Common myeloid progenitor, CD34-positive (primary cell): ENCODE measurements at regions of chr6 and their contacts with region 1.

Region 1: DNA sequence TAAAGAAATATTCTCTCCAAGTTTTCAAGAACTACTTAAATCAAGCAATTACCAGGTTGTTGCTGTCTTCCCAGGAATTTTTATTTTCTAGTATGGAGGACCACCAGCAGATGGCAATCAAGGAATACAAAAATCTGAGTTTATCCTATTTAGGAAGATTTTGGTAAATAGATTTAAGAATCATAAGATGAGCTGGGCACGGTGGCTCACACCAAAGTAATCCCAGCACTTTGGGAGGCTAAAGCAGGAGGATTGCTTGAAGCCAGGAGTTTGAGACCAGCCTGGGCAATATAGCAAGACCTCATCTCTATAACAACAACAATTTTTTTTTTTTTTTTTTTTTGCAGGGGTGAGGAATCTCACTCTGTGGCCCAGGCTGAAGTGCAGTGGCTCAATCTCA is 19.3 kb upstream of the SEC63 start:
- DNase-seq: peak; percentile 43 to 53 (median 48)
- H3K4me3 ChIP-seq: no peak overlapping the region
- H3K27ac ChIP-seq: no peak overlapping the region
- H3K4me1 ChIP-seq: no peaks in the 10 kb centered on the region
- H3K27me3 ChIP-seq: peaks cover 0 to 3% (median 0%) of the 10 kb centered on the region in 5 experiments

Region 2: DNA sequence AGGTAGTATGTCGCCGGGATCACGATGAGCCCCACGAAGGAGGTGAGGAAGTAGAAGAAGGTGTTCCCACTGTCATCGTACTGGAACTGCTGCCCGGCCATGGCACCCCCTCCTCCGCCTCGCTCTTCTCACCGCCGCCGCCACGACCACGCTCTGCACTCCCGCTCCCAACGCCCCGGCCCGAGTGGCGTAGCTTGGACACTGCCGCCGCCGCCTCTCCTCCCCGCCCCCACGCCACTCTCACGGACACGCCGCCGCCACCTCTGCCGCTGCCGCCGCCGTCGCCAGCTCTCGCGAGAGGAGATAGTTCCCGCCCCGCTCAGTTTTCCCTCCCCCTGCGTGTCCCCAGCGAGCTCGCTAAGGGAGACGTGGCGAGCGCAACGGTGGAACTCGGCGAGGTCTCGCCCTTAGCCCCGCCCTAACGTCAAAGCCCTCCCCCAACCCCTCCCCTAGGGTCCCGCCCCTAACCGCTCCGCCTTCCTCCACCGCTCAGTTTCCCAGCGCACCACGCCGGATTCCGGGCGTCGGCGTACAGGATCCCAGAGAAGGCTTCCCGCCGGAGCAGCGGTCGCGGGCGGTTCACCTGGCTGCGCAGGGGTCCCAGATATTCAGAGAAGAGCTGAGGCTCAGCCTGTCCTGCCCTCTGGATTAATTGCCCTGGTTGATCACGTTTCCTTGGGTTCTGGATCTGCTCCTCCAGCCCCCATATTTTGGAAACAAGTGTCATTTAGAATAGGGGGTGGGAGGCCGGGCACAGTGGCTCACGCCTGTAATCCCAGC is 19.2 kb before region 1 on chr6 and contains the start of gene SEC63:
- CTCF ChIA-PET with region 1: no interaction called
- POLR2A ChIA-PET with region 1: no interaction called
- DNase-seq: peak; percentile 95 to 97 (median 97)
- H3K4me3 ChIP-seq: peak within 1 kb of the TSS; percentile 89 to 99 (median 94)
- H3K27ac ChIP-seq: peak within 1 kb of the TSS; percentile 86 to 87
- H3K4me1 ChIP-seq: peaks cover 11 to 32% (median 16%) of the 10 kb centered on the region in 4 experiments
- H3K27me3 ChIP-seq: peaks cover 0 to 4% (median 0%) of the 10 kb centered on the region in 5 experiments

Region 3: GRCh38 chr6:108052706-108053105 is 75.4 kb after region 1 on chr6:
- CTCF ChIA-PET with region 1: interaction called, 65 read pairs
- POLR2A ChIA-PET with region 1: no interaction called
- DNase-seq: no peak
- H3K4me3 ChIP-seq: no peak overlapping the region
- H3K27ac ChIP-seq: no peak overlapping the region
- H3K4me1 ChIP-seq: no peaks in the 10 kb centered on the region
- H3K27me3 ChIP-seq: no peaks in the 10 kb centered on the region